Transverse colon (tissue), 4 donors: ENCODE measurements at regions of chr1 and their contacts with region 1.

Region 1: DNA sequence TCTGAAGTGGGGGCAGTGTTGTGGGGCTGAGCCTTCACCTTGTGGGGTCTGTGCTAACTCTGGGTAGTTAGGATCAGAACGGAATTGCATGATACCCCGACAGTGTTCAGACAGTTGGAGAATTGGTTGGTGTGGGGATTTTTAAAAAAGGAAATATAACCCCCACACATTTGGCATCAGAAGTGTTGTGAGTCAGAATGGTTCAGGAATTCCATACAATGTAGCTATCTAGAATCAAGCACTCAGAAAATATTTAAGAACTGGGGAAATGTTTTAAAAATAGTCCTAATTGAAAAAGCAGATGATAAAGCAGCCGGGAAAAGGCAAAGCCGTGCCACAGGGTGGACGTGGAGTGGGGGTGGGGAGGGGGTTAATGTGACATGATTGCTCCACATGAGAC is 6.5 kb upstream of the S100A7 start:
- DNase-seq: no peak
- H3K4me3 ChIP-seq: no peak overlapping the region
- H3K27ac ChIP-seq: no peak overlapping the region
- H3K4me1 ChIP-seq: peaks cover 0 to 5% (median 0%) of the 10 kb centered on the region in 4 donors
- H3K27me3 ChIP-seq: peaks cover 3% of the 10 kb centered on the region
- CTCF ChIP-seq: no peak
- EP300 ChIP-seq: no peak
- POLR2A ChIP-seq: no peak

Region 2: DNA sequence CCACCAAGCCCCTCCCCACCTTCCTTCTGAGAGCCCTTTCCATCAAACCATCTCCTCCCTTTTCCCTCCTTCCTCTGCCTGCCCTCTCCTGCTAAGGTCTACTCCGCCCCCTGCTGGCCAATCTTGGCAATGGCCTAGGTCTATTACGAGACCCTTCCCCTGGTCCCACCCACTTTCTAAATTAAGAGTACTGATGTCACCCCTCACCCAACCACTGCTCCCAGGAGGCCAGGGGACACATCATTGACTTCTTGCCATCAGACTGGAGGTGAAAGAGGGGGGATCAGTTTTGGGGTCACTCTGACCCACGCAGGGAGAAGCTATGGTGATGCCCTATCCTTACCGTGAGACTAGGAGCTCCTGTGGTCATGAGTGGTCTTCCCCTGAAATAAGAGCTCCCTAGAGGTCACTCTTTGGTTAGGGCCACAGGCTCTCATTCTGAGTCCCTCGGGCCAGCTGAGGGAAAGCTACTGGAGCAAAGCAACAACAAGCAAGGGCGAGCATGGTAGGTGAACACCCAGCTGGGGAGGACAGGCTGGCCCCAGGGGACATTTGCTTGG is 28.1 kb after region 1 on chr1:
- in situ Hi-C with region 1: no loop called
- intact Hi-C with region 1: loop called (anchors 1 kb)
- DNase-seq: peak; percentile 76
- H3K4me3 ChIP-seq: no peak overlapping the region
- H3K27ac ChIP-seq: no peak overlapping the region
- H3K4me1 ChIP-seq: peaks cover 6 to 9% (median 7%) of the 10 kb centered on the region in 4 donors
- H3K27me3 ChIP-seq: no peaks in the 10 kb centered on the region
- CTCF ChIP-seq: peak; percentile 91 to 95 (median 93)
- EP300 ChIP-seq: no peak
- POLR2A ChIP-seq: no peak